Aorta (tissue), 5 donors: ENCODE measurements at regions of chr12 and their contacts with region 1.

Region 1: GRCh38 chr12:56769868-56770267 is 6.7 kb downstream of the HSD17B6 start:
- DNase-seq: no peak
- ATAC-seq: no peak
- H3K4me3 ChIP-seq: no peak overlapping the region
- H3K27ac ChIP-seq: no peak overlapping the region
- H3K4me1 ChIP-seq: no peaks in the 10 kb centered on the region
- H3K27me3 ChIP-seq: no peaks in the 10 kb centered on the region

Region 2: DNA sequence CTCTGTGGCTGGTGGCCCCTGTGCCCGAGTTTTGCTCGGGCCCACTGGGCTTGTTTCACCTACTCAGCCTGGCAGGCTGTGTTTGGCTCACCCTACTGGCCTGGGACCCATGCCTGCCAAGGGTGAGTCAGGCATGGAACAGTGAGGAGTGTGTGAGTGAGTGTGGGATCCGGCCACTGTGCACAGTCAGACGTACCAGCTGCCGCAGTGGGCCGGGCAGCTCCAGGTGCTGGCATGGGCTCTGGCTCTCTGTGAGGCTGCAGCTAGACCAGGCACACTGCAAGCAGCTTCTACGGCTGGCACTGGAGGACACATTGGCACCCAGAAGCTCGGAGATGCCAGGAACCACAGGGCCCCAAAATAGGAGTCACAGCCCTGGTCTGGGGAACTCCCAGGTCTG is 33.9 kb after region 1 on chr12:
- intact Hi-C with region 1: no loop called
- DNase-seq: peak; percentile 79 to 86
- ATAC-seq: peak; percentile 88
- H3K4me3 ChIP-seq: no peak overlapping the region
- H3K27ac ChIP-seq: no peak overlapping the region
- H3K4me1 ChIP-seq: no peaks in the 10 kb centered on the region
- H3K27me3 ChIP-seq: no peaks in the 10 kb centered on the region

Region 3: GRCh38 chr12:56979628-56980027 is 209.8 kb after region 1 on chr12:
- intact Hi-C with region 1: loop called in 1 of 2 experiments (anchors 5 kb)
- DNase-seq: no peak
- ATAC-seq: no peak
- H3K4me3 ChIP-seq: no peak overlapping the region
- H3K27ac ChIP-seq: no peak overlapping the region
- H3K4me1 ChIP-seq: no peaks in the 10 kb centered on the region
- H3K27me3 ChIP-seq: no peaks in the 10 kb centered on the region